A673 (cell line): ENCODE measurements at regions of chr6 and their contacts with region 1.

Region 1: GRCh38 chr6:108091288-108091687 is 16.7 kb upstream of the OSTM1 start:
- DNase-seq: no peak
- H3K4me3 ChIP-seq: no peak overlapping the region
- H3K27ac ChIP-seq: no peak overlapping the region
- H3K4me1 ChIP-seq: no peaks in the 10 kb centered on the region
- H3K27me3 ChIP-seq: no peaks in the 10 kb centered on the region
- CTCF ChIP-seq: no peak

Region 2: DNA sequence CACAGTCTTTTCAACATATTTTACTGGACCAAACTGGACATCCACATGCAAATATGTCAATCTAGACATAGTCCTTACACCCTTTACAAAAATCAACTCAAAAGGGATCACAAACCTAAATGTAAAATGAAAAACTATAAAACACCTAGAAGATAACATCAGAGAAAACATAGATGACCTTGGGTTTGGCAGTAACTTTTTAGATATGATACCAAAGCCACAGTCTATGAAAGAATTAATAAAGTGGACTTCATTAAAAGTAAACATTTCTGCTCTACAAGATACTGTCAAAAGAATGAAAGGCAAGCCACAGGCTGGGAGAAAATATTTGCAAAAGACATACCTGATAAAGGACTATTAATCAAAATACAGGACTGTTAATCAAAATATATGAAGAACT is 997.6 kb before region 1 on chr6:
- CTCF ChIA-PET with region 1: no interaction called
- POLR2A ChIA-PET with region 1: no interaction called
- intact Hi-C with region 1: no loop called
- DNase-seq: no peak
- H3K4me3 ChIP-seq: no peak overlapping the region
- H3K27ac ChIP-seq: no peak overlapping the region
- H3K4me1 ChIP-seq: no peaks in the 10 kb centered on the region
- H3K27me3 ChIP-seq: no peaks in the 10 kb centered on the region
- CTCF ChIP-seq: no peak

Region 3: DNA sequence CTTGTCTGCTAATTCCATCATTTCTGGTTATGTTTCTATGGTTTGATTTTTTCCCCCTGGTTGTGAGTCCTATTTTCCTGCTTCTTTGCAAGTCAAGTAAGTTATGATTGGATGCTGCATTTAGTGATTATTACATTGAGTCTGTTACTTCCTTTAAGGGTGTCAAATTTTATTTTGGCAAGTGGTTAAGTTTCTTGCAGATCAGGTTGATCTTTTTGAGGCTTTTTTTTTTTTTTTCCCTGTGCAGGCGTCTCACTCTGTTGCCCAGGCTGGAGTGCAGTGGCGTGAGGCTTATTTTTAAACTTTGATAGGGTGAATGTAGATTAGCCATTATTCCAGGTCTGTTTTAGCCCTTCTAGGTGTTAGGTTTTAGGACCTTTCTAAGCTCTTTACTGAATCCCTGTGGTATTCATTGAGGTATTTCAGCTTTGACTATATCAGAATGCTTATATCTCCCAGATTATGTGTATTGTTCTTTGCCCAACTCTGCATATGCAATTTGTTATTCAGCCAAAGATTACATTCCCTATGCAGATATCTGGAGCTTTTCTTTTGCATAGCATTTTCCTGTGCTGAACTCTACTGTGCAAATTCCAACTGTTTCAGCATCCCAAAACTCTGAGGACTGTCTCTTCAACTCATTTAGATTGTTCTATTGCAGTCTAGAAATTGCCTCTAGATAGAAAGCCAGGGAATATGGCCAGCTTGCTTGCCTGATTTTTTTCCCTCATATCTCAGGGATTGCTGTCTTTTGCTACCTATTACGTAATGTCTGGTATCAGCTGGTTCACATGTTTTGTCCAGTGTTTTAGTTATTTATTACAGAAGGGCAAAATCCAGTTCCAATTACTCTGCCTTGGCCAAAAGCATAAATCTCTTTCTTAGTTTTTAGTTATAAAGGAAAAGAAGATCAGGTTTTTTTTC is 316.9 kb after region 1 on chr6:
- CTCF ChIA-PET with region 1: no interaction called
- POLR2A ChIA-PET with region 1: no interaction called
- intact Hi-C with region 1: no loop called
- DNase-seq: no peak
- H3K4me3 ChIP-seq: no peak overlapping the region
- H3K27ac ChIP-seq: no peak overlapping the region
- H3K4me1 ChIP-seq: no peaks in the 10 kb centered on the region
- H3K27me3 ChIP-seq: no peaks in the 10 kb centered on the region
- CTCF ChIP-seq: no peak

Region 4: GRCh38 chr6:108464418-108465093 is 373.3 kb after region 1 on chr6:
- CTCF ChIA-PET with region 1: interaction called, 14 read pairs
- POLR2A ChIA-PET with region 1: no interaction called
- intact Hi-C with region 1: no loop called
- DNase-seq: no peak
- H3K4me3 ChIP-seq: no peak overlapping the region
- H3K27ac ChIP-seq: no peak overlapping the region
- H3K4me1 ChIP-seq: no peaks in the 10 kb centered on the region
- H3K27me3 ChIP-seq: no peaks in the 10 kb centered on the region
- CTCF ChIP-seq: no peak

Region 5: GRCh38 chr6:108676555-108676954 is 585.3 kb after region 1 on chr6:
- CTCF ChIA-PET with region 1: interaction called, 15 read pairs
- POLR2A ChIA-PET with region 1: no interaction called
- intact Hi-C with region 1: no loop called
- DNase-seq: peak; percentile 54
- H3K4me3 ChIP-seq: no peak overlapping the region
- H3K27ac ChIP-seq: no peak overlapping the region
- H3K4me1 ChIP-seq: peaks cover 31% of the 10 kb centered on the region
- H3K27me3 ChIP-seq: no peaks in the 10 kb centered on the region
- CTCF ChIP-seq: no peak